SK-N-SH (cell line): ENCODE measurements at regions of chr4 and their contacts with region 1.

Region 1: DNA sequence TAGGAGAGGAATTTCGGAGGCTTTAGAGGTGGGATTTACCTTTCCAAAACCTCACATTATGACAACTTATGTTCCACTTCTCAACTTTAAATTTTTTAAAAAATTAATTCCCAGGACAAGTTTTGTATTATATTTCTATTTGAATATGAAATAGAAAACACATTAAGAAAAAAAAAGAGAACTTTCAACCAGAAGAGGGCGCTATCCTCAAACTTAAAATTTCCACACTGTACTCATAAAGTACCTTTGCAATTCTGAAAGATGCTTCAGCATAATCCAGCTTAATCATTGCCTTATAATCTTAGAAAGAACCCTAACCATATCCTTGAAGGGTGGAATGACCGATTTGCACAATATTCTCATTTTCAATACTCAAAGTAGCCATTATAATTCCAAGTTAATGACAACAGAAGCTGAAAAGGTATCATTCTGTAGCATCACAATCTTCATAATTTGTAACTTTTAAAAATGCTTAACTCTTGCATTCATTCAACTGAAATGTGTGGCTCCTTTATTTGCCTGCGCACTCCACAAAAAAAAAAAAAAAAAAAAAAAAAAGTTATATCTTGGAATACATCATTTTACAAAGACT is 158.0 kb downstream of the KCNIP4 start:
- DNase-seq: peak; percentile 3
- H3K4me3 ChIP-seq: peak overlapping the region in 1 of 2 experiments; percentile 21; a peak in 1 of 4 replicates
- H3K27ac ChIP-seq: peak overlapping the region in 1 of 2 experiments; percentile 21; a peak in 1 of 4 replicates
- H3K4me1 ChIP-seq: no peaks in the 10 kb centered on the region
- H3K27me3 ChIP-seq: no peaks in the 10 kb centered on the region
- CTCF ChIP-seq: peak; percentile 73
- EP300 ChIP-seq: no peak
- RAD21 ChIP-seq: peak; percentile 72

Region 2: DNA sequence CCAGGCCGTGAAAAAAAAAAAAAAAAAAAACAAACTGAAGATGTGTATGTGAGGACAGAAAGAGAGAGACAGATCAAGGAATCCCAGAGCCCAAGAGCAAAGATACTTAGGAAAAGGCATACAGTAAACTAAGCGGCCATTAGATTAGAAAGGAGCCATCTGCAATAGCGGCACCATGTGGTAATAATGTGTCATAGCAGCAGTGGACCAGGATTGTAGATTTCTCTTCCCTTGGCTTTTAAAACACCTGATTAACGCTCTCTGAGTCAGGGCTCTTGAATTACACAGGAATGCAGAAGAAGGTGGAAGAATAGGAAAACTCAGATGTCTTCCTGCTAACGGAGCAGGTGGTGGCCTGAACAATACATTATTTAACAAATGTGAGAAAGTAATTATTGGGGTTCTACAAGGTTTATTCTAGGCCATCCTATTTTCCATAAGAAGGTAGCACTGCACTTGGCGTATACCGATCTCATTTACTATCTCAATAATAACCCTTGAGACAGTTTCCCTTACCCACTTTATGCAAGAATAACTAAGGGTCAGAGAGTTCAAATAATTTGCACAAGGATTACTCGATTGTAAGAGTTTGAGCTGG is 24.6 kb before region 1 on chr4:
- CTCF ChIA-PET with region 1: interaction called, 10 read pairs
- POLR2A ChIA-PET with region 1: no interaction called
- DNase-seq: peak; percentile 25
- H3K4me3 ChIP-seq: no peak overlapping the region; a peak in 1 of 4 replicates
- H3K27ac ChIP-seq: peak overlapping the region in 1 of 2 experiments; percentile 99; a peak in 2 of 4 replicates
- H3K4me1 ChIP-seq: peaks cover 8 to 29% of the 10 kb centered on the region in 2 experiments; a peak in 3 of 4 replicates
- H3K27me3 ChIP-seq: no peaks in the 10 kb centered on the region
- CTCF ChIP-seq: peak; percentile 93
- EP300 ChIP-seq: no peak
- RAD21 ChIP-seq: peak; percentile 92

Region 3: DNA sequence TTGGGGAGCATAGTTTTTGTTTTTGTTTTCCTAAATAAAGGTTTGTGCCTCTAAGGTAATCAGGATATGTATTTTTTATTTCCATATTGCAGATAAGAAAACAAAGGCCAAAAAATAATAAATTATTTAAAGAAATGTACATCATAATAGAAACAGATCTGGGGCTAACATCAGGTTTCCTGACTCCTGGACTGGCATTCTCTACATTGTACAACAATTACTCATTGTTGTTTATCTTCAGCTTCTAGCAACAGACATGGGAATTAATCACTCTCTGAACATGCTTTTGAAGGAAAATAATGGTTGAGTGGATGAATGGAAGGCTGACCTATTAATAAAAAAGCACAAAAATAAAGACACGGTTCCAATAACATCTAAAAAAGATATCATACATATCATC is 11.9 kb after region 1 on chr4:
- CTCF ChIA-PET with region 1: interaction called, 116 read pairs
- POLR2A ChIA-PET with region 1: no interaction called
- DNase-seq: no peak
- H3K4me3 ChIP-seq: peak overlapping the region in 1 of 2 experiments; percentile 20; a peak in 1 of 4 replicates
- H3K27ac ChIP-seq: peak overlapping the region; percentile 76 to 87; a peak in 3 of 4 replicates
- H3K4me1 ChIP-seq: peaks cover 0 to 7% of the 10 kb centered on the region in 2 experiments; a peak in 1 of 4 replicates
- H3K27me3 ChIP-seq: no peaks in the 10 kb centered on the region
- CTCF ChIP-seq: no peak
- EP300 ChIP-seq: peak; percentile 35 to 86
- RAD21 ChIP-seq: no peak

Region 4: DNA sequence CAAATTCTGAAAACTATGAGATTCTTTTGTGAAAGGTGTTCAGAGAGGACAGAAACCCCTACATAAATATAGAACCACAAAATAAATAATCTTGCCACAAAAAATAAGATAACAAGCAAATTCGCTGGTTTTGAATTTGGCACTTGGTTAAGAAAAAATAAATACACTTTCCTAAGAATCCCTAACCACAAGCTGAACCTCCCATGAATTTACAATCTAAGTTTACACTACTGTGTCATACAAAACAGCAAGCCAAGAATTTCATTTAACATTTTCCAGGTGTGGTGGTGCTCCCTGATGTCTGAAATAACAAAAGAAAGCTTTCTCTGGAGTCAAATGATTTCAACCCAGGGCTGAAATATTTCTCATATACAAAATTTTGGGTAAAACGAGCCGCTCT is 37.0 kb after region 1 on chr4:
- CTCF ChIA-PET with region 1: interaction called, 41 read pairs
- POLR2A ChIA-PET with region 1: no interaction called
- DNase-seq: no peak
- H3K4me3 ChIP-seq: peak overlapping the region in 1 of 2 experiments; percentile 19; a peak in 2 of 4 replicates
- H3K27ac ChIP-seq: peak overlapping the region; percentile 28 to 79; a peak in 3 of 4 replicates
- H3K4me1 ChIP-seq: no peaks in the 10 kb centered on the region; a peak in 1 of 4 replicates
- H3K27me3 ChIP-seq: no peaks in the 10 kb centered on the region
- CTCF ChIP-seq: no peak
- EP300 ChIP-seq: no peak; a peak in 1 of 4 replicates
- RAD21 ChIP-seq: no peak

Region 5: DNA sequence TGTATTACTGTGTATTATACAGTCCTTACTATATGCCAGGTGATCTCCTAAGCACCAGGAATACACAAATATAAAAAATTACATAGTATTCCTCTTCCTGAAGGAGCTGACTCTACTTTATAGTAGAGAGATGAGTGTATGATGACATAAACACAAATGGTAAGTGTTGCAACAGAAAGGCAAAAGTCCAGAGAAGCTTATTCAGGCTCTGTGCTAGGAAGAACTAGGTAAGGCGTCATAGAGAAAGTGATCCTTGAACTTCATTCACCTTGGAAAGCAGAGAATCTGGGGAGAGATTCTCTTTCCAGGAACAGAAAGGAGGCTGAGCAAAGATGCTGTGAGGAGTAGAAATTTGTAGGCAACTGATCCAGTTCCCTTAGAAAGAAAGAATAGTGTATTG is 273.1 kb after region 1 on chr4:
- CTCF ChIA-PET with region 1: no interaction called
- POLR2A ChIA-PET with region 1: no interaction called
- DNase-seq: no peak
- H3K4me3 ChIP-seq: no peak overlapping the region
- H3K27ac ChIP-seq: no peak overlapping the region
- H3K4me1 ChIP-seq: no peaks in the 10 kb centered on the region
- H3K27me3 ChIP-seq: no peaks in the 10 kb centered on the region
- CTCF ChIP-seq: no peak
- EP300 ChIP-seq: no peak
- RAD21 ChIP-seq: no peak

Region 6: GRCh38 chr4:22384154-22384553 is 593.6 kb after region 1 on chr4:
- CTCF ChIA-PET with region 1: interaction called, 177 read pairs
- POLR2A ChIA-PET with region 1: no interaction called
- DNase-seq: no peak
- H3K4me3 ChIP-seq: no peak overlapping the region
- H3K27ac ChIP-seq: no peak overlapping the region
- H3K4me1 ChIP-seq: no peaks in the 10 kb centered on the region
- H3K27me3 ChIP-seq: no peaks in the 10 kb centered on the region
- CTCF ChIP-seq: no peak
- EP300 ChIP-seq: no peak
- RAD21 ChIP-seq: no peak

Region 7: DNA sequence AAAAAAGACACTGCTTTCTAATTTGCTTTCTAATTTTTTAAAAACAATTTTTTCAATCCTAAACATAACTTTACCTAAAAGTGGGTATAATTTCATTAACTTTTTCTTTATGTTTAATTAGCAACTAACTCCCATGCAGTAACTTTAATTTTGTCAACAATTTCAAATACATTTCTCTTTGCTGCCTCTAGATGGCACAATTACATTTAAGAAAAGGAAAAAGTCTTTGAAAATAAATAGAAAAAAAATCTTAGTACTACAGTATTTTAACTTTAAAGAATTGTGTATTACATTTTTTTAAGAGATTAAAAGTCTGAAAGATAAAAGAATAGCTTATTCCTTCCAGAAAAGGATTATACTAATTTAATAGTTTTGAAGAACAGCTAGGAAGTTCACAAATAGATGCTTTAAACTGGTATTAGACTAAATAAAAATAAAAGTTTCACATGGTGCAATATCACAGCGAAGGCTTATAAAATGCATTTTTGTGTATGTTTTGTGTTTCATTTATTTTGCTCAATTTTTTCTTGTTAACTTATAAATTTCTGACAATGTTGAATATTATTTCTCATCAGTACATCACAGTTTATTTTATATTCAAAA is 620.2 kb after region 1 on chr4:
- CTCF ChIA-PET with region 1: interaction called, 12 read pairs
- POLR2A ChIA-PET with region 1: no interaction called
- DNase-seq: no peak
- H3K4me3 ChIP-seq: no peak overlapping the region
- H3K27ac ChIP-seq: no peak overlapping the region
- H3K4me1 ChIP-seq: no peaks in the 10 kb centered on the region
- H3K27me3 ChIP-seq: no peaks in the 10 kb centered on the region
- CTCF ChIP-seq: peak; percentile 79
- EP300 ChIP-seq: no peak
- RAD21 ChIP-seq: peak; percentile 59